ENCODE measurements at regions of chr3 and their contacts with region 1.

Region 1: DNA sequence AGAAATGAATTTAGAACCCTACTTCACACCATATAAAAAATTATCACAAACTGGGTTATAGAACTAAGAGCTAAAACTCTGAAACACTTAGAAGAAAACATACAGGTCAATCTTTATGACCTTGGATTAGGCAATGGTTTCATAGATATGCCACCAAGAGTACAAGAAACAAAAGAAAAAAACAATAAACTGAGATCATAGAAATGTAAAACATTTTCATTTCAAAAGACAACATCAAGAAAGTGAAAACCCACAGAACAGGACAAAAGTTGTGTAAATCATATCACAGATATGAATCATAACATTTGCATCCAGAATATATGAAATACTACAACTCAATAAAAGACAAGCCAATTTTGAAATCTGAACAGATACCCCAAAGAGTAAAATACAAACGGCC is 72.4 kb downstream of the TBL1XR1 start:
- DNase-seq: no peak
- ATAC-seq: no peak
- H3K4me3 ChIP-seq: no peak overlapping the region
- H3K4me3 Mint-ChIP-seq: no peak overlapping the region
- H3K27ac ChIP-seq: no peak overlapping the region
- H3K27ac Mint-ChIP-seq: no peak overlapping the region
- H3K4me1 ChIP-seq: peaks cover 0 to 8% of the 10 kb centered on the region in 2 donors
- H3K4me1 Mint-ChIP-seq: peaks cover 59% of the 10 kb centered on the region
- H3K27me3 ChIP-seq: no peaks in the 10 kb centered on the region
- H3K27me3 Mint-ChIP-seq: no peaks in the 10 kb centered on the region
- CTCF ChIP-seq: no peak

Region 2: GRCh38 chr3:176663837-176664831 is 460.7 kb before region 1 on chr3:
- CTCF ChIA-PET with region 1: no interaction called
- POLR2A ChIA-PET with region 1: no interaction called
- intact Hi-C with region 1: no loop called
- DNase-seq: no peak
- ATAC-seq: no peak
- H3K4me3 ChIP-seq: no peak overlapping the region
- H3K4me3 Mint-ChIP-seq: no peak overlapping the region
- H3K27ac ChIP-seq: no peak overlapping the region
- H3K27ac Mint-ChIP-seq: no peak overlapping the region
- H3K4me1 ChIP-seq: no peaks in the 10 kb centered on the region
- H3K4me1 Mint-ChIP-seq: no peaks in the 10 kb centered on the region
- H3K27me3 ChIP-seq: no peaks in the 10 kb centered on the region
- H3K27me3 Mint-ChIP-seq: no peaks in the 10 kb centered on the region
- CTCF ChIP-seq: no peak

Region 3: GRCh38 chr3:177089110-177089509 is 35.8 kb before region 1 on chr3:
- CTCF ChIA-PET with region 1: no interaction called
- POLR2A ChIA-PET with region 1: no interaction called
- intact Hi-C with region 1: loop called (anchors 5 kb)
- DNase-seq: no peak
- ATAC-seq: no peak
- H3K4me3 ChIP-seq: no peak overlapping the region
- H3K4me3 Mint-ChIP-seq: no peak overlapping the region
- H3K27ac ChIP-seq: peak overlapping the region in 1 of 2 donors; percentile 24
- H3K27ac Mint-ChIP-seq: peak overlapping the region; percentile 28
- H3K4me1 ChIP-seq: peaks cover 26 to 39% of the 10 kb centered on the region in 2 donors
- H3K4me1 Mint-ChIP-seq: peaks cover 73% of the 10 kb centered on the region
- H3K27me3 ChIP-seq: no peaks in the 10 kb centered on the region
- H3K27me3 Mint-ChIP-seq: no peaks in the 10 kb centered on the region
- CTCF ChIP-seq: no peak